ENCODE measurements at regions of chr20 and their contacts with region 1.

Region 1: DNA sequence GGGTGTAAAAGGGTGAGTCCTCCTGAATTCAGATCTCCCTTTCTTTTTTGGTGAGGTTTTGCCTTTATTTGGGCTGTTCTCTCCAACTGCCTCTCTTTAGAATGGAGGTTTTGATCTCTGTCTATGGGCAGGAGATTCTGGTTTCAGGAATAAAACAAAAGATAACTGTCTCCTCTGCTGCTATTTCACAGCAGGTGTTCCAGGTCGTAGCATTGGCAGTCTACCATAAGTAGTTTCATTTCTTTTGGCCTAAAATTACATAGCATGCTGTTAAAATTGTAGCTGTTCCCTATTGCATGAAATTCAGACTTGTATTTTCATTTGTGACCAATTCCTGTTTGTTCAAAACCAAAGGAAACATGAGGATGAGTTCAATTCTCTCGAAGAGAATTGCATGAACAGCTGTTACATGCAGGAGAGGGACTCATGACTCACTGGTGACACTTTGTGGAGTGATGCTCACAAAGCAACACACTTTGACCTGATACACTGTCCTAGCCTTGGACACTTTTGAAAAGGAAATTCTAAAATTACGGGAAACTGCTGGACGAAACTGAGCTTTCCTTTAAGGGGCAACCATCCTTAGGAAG is 76.8 kb upstream of the SIRPG start:
- DNase-seq: no peak
- H3K4me3 ChIP-seq: no peak overlapping the region
- H3K27ac ChIP-seq: peak overlapping the region; percentile 91
- H3K4me1 ChIP-seq: peaks cover 50% of the 10 kb centered on the region
- H3K27me3 ChIP-seq: no peaks in the 10 kb centered on the region
- CTCF ChIP-seq: no peak

Region 2: DNA sequence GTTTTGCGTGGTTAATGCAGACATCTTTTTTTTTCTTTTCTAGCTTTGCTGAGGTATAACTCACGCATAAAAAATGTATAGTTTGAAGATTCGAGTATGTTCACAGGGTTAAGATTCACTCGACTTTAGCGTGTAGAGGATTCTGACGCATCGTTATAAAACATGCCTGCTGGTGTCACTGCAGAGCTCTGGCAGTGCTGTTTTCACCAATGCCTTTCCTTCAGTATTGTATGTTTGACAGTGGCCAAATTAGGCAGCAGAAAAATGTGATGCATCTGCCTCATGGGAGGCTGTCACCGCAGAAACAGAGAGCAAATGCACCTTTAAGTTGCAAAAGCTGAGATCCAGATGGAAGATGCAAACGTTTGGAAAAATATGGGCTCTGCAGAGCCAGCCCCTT is 225.1 kb before region 1 on chr20:
- CTCF ChIA-PET with region 1: interaction called, 3 read pairs
- POLR2A ChIA-PET with region 1: no interaction called
- intact Hi-C with region 1: loop called (anchors 1 kb)
- DNase-seq: no peak
- H3K4me3 ChIP-seq: no peak overlapping the region
- H3K27ac ChIP-seq: no peak overlapping the region
- H3K4me1 ChIP-seq: peaks cover 23% of the 10 kb centered on the region
- H3K27me3 ChIP-seq: no peaks in the 10 kb centered on the region
- CTCF ChIP-seq: no peak

Region 3: DNA sequence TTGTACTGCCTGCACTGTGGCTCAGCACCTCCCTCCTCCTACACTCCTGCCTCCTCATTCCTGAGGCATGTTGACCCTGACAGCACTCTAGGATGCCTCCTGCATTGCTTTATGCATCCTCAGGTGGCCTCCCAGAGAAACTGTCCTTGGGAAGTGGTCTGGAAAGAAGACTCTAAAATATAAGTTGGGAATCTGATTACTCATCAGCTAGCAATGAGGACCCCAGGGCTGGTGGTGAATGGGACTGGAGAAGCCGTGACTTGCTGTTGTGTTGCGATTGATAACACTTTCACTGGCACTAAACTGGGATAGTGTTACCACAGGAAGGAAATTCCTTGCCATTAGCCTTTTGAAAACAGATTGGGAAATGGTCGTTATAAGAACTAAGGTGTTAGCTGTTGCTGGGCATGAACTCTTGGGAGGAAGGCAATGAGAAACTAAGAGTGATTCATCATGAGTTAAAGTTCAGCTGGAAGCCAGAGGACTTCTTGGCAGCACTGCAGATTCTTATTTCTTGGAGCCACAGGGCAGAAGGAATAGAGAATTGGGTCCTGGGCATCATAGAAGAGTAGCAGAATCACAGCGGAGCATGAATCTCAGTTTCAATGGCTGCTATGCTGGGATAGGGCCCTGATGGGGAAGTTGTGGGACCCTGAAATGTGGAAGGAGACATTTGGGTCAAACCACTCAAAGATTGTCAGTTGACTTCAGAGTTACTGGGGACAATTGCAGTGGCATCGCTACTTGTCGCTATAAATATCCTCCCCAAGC is 166.8 kb before region 1 on chr20:
- CTCF ChIA-PET with region 1: no interaction called
- POLR2A ChIA-PET with region 1: no interaction called
- intact Hi-C with region 1: loop called (anchors 1 kb)
- DNase-seq: peak; percentile 76 to 97
- H3K4me3 ChIP-seq: no peak overlapping the region
- H3K27ac ChIP-seq: peak overlapping the region; percentile 99
- H3K4me1 ChIP-seq: peaks cover 67% of the 10 kb centered on the region
- H3K27me3 ChIP-seq: no peaks in the 10 kb centered on the region
- CTCF ChIP-seq: no peak

Region 4: DNA sequence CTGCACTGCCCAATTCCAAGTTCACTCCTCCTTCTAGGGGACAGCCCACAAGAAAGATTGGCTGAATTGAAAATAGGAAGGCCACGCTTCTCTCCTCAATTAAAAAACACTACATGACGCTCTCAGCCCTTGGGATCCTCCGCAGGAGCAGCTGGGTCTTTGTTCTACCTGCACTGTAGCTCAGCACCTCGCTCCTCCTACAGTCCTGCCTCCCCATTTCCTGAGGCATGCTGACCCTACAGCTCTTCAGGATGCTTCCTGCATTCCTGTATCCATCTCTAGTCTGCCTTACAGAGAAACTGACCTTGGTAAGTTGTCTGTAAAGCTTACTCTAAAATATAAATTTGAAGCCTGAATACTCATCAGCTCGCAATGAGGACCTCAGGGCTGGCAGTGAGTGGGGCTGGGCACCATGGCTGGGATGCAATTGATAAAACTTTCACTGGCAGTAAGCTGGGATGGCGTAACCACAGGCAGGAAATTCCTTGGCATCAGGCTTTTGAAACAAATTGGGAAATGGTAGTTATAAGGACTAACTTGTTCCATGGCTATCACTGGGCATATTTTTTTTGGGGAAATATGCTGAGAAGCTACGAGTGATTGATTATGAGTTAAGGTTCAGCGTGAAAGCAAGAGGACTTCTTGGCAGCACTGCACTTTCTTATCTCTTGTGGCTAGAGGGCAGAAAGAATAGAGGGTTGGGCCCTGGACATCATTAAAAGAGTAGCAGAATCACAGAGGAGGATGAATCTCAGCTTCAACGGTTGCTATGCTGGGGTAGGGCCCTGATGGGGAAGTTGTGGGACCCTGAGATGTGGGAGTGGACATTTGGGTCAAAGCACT is 102.8 kb before region 1 on chr20:
- CTCF ChIA-PET with region 1: no interaction called
- POLR2A ChIA-PET with region 1: no interaction called
- intact Hi-C with region 1: loop called (anchors 5 kb)
- DNase-seq: peak; percentile 49 to 84
- H3K4me3 ChIP-seq: peak overlapping the region; percentile 19; the same call in 1 of the 2 replicates
- H3K27ac ChIP-seq: peak overlapping the region; percentile 57
- H3K4me1 ChIP-seq: peaks cover 47% of the 10 kb centered on the region
- H3K27me3 ChIP-seq: no peaks in the 10 kb centered on the region
- CTCF ChIP-seq: no peak

Measured in PC-9 (cell line).